ENCODE measurements at regions of chr10 and their contacts with region 1.

Region 1: GRCh38 chr10:87094373-87095235 is at the starts of genes GLUD1 and SHLD2:
- DNase-seq: peak; percentile 93
- H3K4me3 Mint-ChIP-seq: peak within 1 kb of the TSS; percentile 96
- H3K27ac Mint-ChIP-seq: peak within 1 kb of the TSS; percentile 92
- H3K4me1 Mint-ChIP-seq: peaks cover 42% of the 10 kb centered on the region
- H3K27me3 Mint-ChIP-seq: no peaks in the 10 kb centered on the region
- total RNA-seq, gene GLUD1: 166 to 168 TPM
- total RNA-seq, gene SHLD2: 16.7 to 17.6 TPM

Region 2: DNA sequence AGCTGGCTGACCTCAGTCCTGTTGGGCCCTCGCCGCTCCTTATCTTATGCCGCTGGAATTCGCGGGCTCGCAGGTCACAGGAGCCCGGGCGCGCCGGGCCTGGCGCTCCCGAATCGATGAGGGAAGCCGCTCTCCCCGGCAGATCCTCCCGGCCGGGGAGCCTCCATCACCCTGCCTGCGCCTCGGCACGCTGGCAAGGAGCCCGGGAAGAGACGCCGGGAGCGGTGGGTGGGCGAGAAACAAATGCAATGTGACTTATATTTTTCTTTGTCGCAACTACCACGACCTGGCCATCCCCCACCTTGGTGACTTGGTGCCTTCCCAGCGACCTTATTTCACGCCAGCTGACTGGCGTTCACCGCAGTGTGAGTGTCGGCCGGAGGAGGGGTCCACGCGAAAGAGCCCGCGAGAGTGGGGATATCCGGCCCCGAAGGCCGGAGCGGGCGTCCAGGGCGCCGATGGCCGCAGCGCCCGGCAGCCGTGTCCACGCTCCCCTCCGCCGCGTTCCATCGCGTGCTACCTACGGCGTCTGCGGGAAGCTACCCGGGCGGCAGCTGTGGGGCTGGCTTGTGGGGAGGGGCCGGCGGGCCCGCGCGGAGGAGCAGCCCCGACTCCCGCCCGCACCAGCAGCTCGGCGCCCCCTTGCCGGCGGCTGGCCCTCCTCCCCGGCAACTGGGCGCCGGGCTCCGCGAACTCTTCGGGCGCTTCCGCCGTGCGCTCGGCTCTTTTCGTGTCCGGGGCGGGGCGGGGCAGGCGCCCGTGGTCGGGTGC is 338.7 kb before region 1 on chr10:
- CTCF ChIA-PET with region 1: no interaction called
- intact Hi-C with region 1: loop called (anchors 2 kb)
- DNase-seq: peak; percentile 86
- H3K4me3 Mint-ChIP-seq: peak overlapping the region; percentile 76
- H3K27ac Mint-ChIP-seq: no peak overlapping the region
- H3K4me1 Mint-ChIP-seq: peaks cover 28% of the 10 kb centered on the region
- H3K27me3 Mint-ChIP-seq: peaks cover 31% of the 10 kb centered on the region

Region 3: GRCh38 chr10:86868353-86868752 is 226.3 kb before region 1 on chr10:
- CTCF ChIA-PET with region 1: no interaction called
- intact Hi-C with region 1: no loop called
- DNase-seq: no peak
- H3K4me3 Mint-ChIP-seq: no peak overlapping the region
- H3K27ac Mint-ChIP-seq: no peak overlapping the region
- H3K4me1 Mint-ChIP-seq: no peaks in the 10 kb centered on the region
- H3K27me3 Mint-ChIP-seq: no peaks in the 10 kb centered on the region

Region 4: GRCh38 chr10:86936661-86937501 is 157.7 kb before region 1 on chr10:
- CTCF ChIA-PET with region 1: interaction called, 3 read pairs
- intact Hi-C with region 1: loop called (anchors 2 kb)
- DNase-seq: no peak
- H3K4me3 Mint-ChIP-seq: no peak overlapping the region
- H3K27ac Mint-ChIP-seq: no peak overlapping the region
- H3K4me1 Mint-ChIP-seq: no peaks in the 10 kb centered on the region
- H3K27me3 Mint-ChIP-seq: no peaks in the 10 kb centered on the region

Region 5: GRCh38 chr10:86971232-86971991 is 123.2 kb before region 1 on chr10:
- CTCF ChIA-PET with region 1: interaction called, 5 read pairs
- intact Hi-C with region 1: loop called (anchors 1 kb)
- DNase-seq: peak; percentile 83
- H3K4me3 Mint-ChIP-seq: peak overlapping the region; percentile 72
- H3K27ac Mint-ChIP-seq: peak overlapping the region; percentile 56
- H3K4me1 Mint-ChIP-seq: peaks cover 35% of the 10 kb centered on the region
- H3K27me3 Mint-ChIP-seq: no peaks in the 10 kb centered on the region

Region 6: GRCh38 chr10:87064651-87065050 is 30.0 kb before region 1 on chr10:
- CTCF ChIA-PET with region 1: no interaction called
- intact Hi-C with region 1: no loop called
- DNase-seq: no peak
- H3K4me3 Mint-ChIP-seq: no peak overlapping the region
- H3K27ac Mint-ChIP-seq: no peak overlapping the region
- H3K4me1 Mint-ChIP-seq: no peaks in the 10 kb centered on the region
- H3K27me3 Mint-ChIP-seq: no peaks in the 10 kb centered on the region

Region 7: GRCh38 chr10:87079106-87079836 is 15.3 kb before region 1 on chr10:
- CTCF ChIA-PET with region 1: no interaction called
- intact Hi-C with region 1: loop called (anchors 1 kb)
- DNase-seq: no peak
- H3K4me3 Mint-ChIP-seq: no peak overlapping the region
- H3K27ac Mint-ChIP-seq: no peak overlapping the region
- H3K4me1 Mint-ChIP-seq: peaks cover 37% of the 10 kb centered on the region
- H3K27me3 Mint-ChIP-seq: no peaks in the 10 kb centered on the region

Region 8: DNA sequence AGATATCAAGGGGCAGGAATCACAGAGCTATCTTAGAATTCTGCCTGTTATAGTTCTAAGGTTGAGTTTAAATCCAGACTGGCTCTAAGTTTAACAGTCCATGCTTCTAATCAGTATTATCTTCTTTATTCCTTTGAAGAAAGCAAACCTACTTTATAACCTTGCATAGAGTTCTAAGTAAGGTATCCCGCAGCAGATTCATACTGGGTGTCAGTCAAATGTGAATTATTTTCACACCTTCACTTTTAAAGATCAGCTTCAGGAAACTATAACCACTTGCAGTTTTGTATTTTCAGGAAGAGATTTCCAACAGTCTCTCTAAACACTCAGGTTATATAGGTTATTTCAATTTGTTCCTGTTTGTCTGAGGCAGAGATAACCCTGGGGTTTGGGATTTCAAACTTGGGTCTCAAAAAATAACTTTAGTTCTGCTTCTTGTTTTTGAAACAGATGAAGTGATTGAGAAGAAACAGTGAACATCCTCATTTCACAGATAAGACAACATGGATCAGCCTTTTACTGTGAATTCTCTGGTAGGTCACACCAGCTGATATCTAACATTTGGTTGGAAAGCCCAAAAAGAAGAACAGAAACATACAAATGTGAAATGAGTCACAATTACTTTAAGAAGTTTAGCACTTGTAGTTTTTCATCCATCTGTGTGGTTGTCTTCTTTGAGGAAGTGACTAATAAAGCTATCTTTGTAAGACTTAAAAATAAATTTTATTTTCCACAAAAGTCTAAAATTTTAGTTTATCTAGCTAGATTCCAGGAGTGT is 1806.8 kb after region 1 on chr10:
- CTCF ChIA-PET with region 1: no interaction called
- intact Hi-C with region 1: loop called (anchors 10 kb)
- DNase-seq: no peak
- H3K4me3 Mint-ChIP-seq: peak overlapping the region; percentile 2
- H3K27ac Mint-ChIP-seq: peak overlapping the region; percentile 82
- H3K4me1 Mint-ChIP-seq: peaks cover 59% of the 10 kb centered on the region
- H3K27me3 Mint-ChIP-seq: no peaks in the 10 kb centered on the region